Mammary epithelial cell (primary cell): ENCODE measurements at regions of chr13 and their contacts with region 1.

Region 1: DNA sequence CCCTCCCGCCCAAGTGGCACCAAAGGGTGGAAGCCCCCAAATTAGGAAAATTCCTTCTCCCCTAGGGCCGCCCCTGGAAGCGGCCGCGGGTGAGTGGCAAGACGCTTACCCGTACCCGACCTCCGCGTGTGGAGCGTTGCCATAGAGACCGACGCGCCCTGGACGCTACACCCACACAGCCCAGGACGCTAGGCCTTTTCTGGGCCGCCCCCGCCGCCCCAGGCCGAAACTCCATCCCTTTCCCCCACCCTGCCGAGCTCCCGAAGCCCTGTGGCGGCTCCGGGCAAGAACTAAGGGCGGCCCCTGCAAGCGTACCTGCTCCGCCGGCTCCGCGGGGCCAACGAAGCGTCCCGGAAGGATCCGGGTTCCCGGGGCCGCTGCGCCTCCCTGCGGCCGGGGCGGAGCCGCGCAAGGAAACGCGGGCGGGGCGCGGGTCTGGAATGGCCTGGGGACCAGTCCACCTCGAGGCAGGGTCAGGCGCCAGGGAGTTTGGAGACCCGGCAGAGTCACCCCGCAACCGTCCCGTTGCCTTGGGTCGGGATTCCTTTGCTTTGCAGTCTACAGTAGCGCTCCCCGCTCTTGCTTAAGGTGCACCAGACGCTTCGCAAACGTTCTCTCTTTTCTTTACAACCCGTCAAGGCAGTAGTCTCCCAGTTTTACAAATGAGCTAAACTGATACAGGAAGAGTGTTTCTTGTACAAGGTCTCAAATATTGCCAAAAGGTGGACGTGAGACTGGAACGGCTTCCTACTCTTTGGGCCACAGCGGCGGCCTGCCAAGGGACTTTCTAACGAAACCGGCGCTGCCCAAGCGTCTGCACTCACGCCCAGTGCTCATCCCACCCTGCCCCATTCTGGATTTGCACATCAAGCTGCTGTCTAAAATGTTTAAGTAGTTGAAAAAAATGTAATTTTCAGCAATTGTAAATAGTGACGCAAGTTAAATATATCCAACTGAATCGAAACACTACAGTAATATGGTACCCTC is at the start of gene NEK5:
- DNase-seq: peak; percentile 57
- H3K4me3 ChIP-seq: peak within 1 kb of the TSS; percentile 54 to 79 (median 62)
- H3K27ac ChIP-seq: no peak within 1 kb of the TSS
- H3K4me1 ChIP-seq: peaks cover 21% of the 10 kb centered on the region
- H3K27me3 ChIP-seq: no peaks in the 10 kb centered on the region
- CTCF ChIP-seq: peak; percentile 26 to 87
- total RNA-seq, gene NEK5: 0.26 to 0.33 TPM

Region 2: DNA sequence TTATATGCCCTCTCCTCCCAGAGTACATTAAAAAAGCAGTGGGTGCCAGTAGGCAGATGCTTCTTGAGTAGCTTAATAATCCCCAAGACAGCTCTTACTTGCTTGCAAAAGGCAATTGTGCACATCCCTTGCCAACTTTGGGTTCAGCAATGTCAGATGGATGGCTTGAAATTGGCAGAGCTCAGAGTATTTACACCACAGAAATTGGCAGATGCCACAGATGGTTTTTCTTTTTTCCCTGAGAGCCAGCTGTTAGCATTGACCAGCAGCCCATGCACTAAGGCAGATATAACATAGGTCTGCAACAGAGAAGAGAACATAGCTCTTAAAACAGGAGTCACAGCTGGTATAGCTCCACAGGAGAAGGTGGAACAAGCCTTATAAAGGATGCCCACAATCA is 1237.8 kb before region 1 on chr13:
- CTCF ChIA-PET with region 1: no interaction called
- dilution Hi-C with region 1: no loop called
- in situ Hi-C with region 1: no loop called
- intact Hi-C with region 1: no loop called
- DNase-seq: no peak
- H3K4me3 ChIP-seq: no peak overlapping the region
- H3K27ac ChIP-seq: no peak overlapping the region
- H3K4me1 ChIP-seq: no peaks in the 10 kb centered on the region
- H3K27me3 ChIP-seq: peaks cover 5% of the 10 kb centered on the region
- CTCF ChIP-seq: no peak

Region 3: GRCh38 chr13:51803422-51804294 is 325.3 kb before region 1 on chr13 and contains the start of gene DHRS12:
- CTCF ChIA-PET with region 1: no interaction called
- dilution Hi-C with region 1: no loop called
- in situ Hi-C with region 1: loop called in 1 of 2 experiments (anchors 10 kb)
- intact Hi-C with region 1: no loop called
- DNase-seq: peak; percentile 80
- H3K4me3 ChIP-seq: peak within 1 kb of the TSS; percentile 73 to 84 (median 75)
- H3K27ac ChIP-seq: peak within 1 kb of the TSS; percentile 87
- H3K4me1 ChIP-seq: peaks cover 22% of the 10 kb centered on the region
- H3K27me3 ChIP-seq: no peaks in the 10 kb centered on the region
- CTCF ChIP-seq: peak in 1 of 2 donors; percentile 16
- total RNA-seq, gene DHRS12: 5.5 to 8.7 TPM

Region 4: DNA sequence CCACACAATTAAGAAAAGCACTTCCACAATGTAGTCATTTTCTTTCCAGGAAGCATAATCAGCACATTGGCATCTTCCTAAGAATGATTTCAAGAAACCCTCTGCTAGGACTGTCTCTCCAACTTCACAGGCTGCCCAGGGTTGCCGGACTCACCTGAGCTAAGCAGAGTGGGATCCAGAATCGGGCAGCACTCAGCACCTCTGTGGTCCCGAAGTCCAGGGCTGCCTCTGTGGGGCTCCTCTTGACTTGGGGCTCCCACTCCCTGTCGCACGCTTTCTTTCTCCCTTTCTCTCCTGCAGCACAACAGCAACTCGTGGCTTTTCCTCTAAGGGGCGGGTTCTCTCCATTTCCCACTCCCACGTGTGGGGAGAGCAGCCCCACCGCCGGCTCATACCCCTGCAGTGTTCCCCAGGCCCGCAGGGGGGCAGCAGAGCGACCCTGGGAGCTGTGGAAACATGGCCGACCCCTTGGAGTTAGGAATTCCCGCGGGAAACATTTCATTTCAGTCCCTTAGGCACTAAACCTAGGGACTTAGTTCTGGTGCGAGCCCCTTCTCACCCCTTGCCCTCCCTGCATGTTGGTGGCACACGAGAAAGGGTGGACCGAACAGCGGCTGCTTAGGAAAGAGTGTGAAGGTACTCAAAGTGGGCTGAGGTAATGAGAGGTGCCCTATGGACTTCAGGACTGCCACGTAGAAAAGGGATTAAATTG is 284.0 kb before region 1 on chr13 and contains the start of gene TMEM272:
- CTCF ChIA-PET with region 1: no interaction called
- dilution Hi-C with region 1: no loop called
- in situ Hi-C with region 1: no loop called
- intact Hi-C with region 1: loop called (anchors 1 kb)
- DNase-seq: no peak
- H3K4me3 ChIP-seq: no peak within 1 kb of the TSS
- H3K27ac ChIP-seq: no peak within 1 kb of the TSS
- H3K4me1 ChIP-seq: no peaks in the 10 kb centered on the region
- H3K27me3 ChIP-seq: no peaks in the 10 kb centered on the region
- CTCF ChIP-seq: peak; percentile 73 to 75
- total RNA-seq, gene TMEM272: not detected

Region 5: DNA sequence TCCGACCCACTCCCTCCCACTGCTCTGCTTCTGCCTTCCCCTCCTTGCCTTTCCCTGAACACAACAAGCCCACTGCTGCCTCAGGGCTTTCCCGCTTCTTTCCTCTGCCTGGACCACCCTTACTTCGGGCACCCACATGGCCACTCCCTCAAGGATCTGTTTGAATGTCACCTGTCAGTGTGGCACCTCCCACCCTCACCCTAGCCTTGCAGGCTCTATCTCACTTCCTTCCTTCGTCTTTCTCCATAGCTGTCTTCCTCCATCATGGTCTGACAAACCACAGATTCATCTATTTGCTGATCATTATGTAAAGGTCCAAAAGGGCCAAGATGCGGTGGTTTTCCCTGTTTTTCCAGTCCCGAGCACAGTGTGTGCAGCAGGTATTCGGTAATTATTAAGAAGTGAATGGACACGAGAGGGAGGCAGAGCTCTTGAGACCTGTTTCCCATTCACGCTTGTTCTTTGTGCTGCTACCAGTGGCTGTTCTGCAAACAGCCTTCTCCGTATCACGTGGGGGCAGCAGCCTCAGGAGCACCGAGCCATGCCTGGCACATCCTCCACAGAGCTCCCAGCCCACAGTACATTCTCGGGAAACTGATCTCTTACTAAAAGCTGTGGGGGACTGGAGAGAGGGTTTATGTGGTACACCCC is 217.0 kb before region 1 on chr13:
- CTCF ChIA-PET with region 1: interaction called, 5 read pairs
- dilution Hi-C with region 1: no loop called
- in situ Hi-C with region 1: no loop called
- intact Hi-C with region 1: loop called (anchors 5 kb)
- DNase-seq: no peak
- H3K4me3 ChIP-seq: no peak overlapping the region
- H3K27ac ChIP-seq: no peak overlapping the region
- H3K4me1 ChIP-seq: no peaks in the 10 kb centered on the region
- H3K27me3 ChIP-seq: no peaks in the 10 kb centered on the region
- CTCF ChIP-seq: peak in 1 of 2 donors; percentile 20

Region 6: GRCh38 chr13:52001120-52001731 is 127.8 kb before region 1 on chr13:
- CTCF ChIA-PET with region 1: no interaction called
- dilution Hi-C with region 1: no loop called
- in situ Hi-C with region 1: loop called in 1 of 2 experiments (anchors 10 kb)
- intact Hi-C with region 1: loop called (anchors 1 kb)
- DNase-seq: no peak
- H3K4me3 ChIP-seq: no peak overlapping the region
- H3K27ac ChIP-seq: no peak overlapping the region
- H3K4me1 ChIP-seq: peaks cover 18% of the 10 kb centered on the region
- H3K27me3 ChIP-seq: no peaks in the 10 kb centered on the region
- CTCF ChIP-seq: peak; percentile 59 to 64

Region 7: DNA sequence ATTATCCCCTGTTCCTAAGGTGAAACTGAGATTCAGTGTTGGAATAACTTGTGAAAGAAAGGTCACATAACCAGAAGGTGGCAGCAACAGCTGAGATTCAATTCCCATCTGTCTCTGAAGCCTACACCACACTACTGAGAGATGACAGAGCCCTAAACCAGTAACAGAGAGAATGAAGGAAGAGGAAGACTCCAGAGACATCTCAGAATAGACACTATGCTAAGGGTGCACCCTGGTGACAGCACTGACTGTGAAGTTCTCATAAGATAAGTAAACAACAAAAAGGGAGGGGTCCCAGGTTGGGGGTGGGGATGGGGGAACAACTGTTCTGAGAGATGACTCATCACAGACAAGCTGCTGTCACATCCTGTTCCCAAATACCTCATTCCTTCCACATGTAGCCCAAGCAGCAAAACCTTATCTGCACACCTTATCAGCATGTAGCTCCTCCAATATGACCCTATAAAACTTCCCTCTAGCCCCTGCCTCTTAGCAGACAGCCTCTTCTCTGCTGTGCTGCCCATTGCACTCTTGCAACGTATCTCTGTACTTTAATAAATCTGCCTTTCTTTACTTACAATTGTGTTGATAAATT is 58.0 kb before region 1 on chr13:
- CTCF ChIA-PET with region 1: interaction called, 6 read pairs
- dilution Hi-C with region 1: no loop called
- in situ Hi-C with region 1: no loop called
- intact Hi-C with region 1: loop called (anchors 1 kb)
- DNase-seq: peak; percentile 46
- H3K4me3 ChIP-seq: no peak overlapping the region
- H3K27ac ChIP-seq: no peak overlapping the region
- H3K4me1 ChIP-seq: peaks cover 5% of the 10 kb centered on the region
- H3K27me3 ChIP-seq: no peaks in the 10 kb centered on the region
- CTCF ChIP-seq: peak; percentile 29 to 50